GM18951 (cell line): ENCODE measurements at regions of chr6 and their contacts with region 1.

Region 1: DNA sequence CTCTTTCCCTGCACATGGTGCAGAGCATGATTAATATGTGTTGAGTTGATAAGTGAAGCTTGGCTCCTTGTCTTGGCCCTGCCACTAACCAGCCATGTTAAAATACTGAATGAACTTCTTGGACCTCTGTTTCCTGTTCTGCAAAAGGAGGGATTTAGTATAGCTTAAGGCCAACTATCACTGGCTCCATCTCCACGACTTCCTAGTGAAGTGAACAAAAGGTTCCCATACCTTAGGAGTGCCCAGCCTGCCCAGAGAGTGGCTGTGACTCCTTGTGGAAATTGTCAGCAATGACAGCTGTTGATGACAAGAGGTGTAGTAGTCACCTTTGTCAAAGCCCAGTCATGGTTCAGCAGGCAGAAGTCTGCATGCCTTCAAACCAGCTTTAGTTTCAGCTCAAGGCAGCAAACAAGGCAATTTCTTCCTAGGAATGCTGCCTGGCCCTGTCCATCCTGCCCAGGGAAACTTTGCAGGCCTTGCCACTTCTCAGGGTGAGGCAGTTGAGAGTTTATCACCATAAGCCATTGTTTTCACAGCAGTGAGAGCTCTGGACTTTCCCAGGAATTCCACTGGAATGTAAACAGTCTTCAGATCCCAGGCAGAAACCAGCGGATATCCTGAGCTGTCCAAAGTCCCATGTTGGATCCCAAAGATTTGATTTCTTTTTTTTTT is 169.7 kb upstream of the TNFAIP3 start:
- POLR2A ChIP-seq: no peak

Region 2: GRCh38 chr6:136823128-136823660 is 874.2 kb before region 1 on chr6:
- in situ Hi-C with region 1: no loop called
- POLR2A ChIP-seq: no peak

Region 3: DNA sequence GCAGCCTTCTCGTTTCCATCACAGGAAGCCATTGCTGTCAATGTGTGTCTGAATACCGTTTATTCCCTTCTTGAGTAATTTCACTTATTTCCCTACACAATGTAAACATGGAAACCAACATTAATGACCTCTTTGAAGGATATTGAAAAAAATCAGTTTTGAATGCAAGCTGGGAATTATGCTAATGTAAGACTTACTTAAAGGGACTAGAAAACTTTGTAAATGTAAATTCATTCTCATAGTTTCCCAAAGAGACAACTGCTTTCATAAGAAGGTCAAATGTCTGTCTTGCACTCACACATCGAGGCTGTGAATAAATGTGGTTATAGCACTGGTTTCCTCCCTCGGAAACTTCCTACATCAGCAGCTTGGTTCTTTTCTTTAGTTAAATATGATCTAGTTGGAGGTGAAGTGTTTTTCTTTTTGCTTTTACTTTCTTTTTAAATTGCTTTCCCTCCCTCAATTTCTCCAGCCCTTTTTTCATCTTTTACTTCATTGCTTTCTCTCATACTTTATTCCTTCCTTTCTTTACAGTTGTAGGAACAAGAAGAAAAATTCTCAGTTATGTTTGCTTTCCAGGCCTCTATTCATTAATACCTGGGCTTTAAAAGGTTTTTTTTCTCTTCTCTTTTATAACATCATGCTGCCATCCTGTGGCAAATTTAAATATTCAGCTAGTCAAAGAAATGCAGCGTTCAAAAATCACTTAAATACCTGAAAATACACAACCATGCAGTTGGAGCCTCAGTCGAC is 278.0 kb after region 1 on chr6:
- in situ Hi-C with region 1: loop called (anchors 10 kb)
- POLR2A ChIP-seq: no peak

Region 4: DNA sequence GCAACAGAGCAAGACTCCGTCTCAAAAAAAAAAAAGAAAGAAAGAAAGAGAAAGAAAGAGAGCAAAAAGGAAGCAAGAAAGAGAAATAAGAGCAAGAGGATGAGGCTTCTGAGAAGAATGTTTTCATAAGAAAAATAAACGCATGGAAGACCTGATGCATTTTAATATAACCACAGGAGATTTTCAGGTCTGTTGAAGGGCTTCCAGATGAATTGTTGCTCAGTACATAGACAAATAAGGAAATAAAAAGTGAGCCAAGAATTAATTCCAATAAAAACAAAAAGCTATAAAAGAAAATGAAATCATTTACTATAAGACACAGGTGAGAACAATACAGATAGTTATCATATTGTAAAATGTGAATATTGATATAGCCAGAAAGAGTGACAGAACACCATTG is 366.3 kb after region 1 on chr6:
- in situ Hi-C with region 1: no loop called
- POLR2A ChIP-seq: no peak